CD8-positive, alpha-beta T cell (primary cell): ENCODE measurements at regions of chr7 and their contacts with region 1.

Region 1: DNA sequence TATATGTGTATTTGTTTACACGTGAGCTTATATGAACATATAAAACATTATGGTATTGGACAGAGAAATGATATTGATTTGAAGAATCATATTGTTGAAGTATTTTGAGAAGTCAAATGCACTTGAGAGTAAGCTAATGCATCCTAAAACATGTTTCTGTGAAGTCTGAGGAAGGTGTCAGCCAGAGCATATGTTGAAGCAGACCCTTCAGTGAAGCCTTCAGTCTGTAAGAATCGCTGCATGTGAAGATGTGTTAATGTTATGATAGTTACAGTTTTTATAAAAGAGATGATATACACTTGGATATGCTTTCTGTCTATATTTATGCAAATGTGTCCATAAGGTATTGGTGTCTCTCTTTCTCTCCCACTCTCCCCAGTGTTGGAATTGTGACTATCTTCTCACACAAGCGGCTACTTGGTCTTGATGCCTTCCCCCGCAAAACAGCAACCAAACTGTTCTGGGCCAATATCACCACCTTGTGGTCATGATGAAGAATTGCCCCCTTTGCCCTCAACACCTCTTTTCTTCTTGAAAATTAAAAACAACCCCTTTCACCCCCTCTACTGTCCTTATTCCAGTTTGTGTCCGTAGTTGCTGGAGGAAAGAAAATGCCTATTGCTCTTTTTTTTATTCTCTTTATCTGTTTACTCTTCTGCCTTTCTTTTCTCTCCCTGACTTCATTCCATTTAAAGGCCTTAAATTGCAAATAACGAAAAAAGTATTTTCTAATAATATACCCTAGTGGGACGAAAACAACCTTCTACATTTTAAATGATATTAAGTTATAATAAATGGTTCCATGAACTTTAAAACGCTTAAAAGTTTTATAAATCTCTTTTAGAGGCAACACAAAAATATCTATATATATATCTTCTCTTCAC is 64.9 kb downstream of the IKZF1 start:
- DNase-seq: peak in 4 of 9 experiments; percentile 55 to 92 (median 73)
- ATAC-seq: peak; percentile 58
- H3K4me3 ChIP-seq: no peak overlapping the region
- H3K4me3 Mint-ChIP-seq: peak overlapping the region; percentile 44
- H3K27ac ChIP-seq: peak overlapping the region in 1 of 2 experiments; percentile 67
- H3K27ac Mint-ChIP-seq: peak overlapping the region; percentile 99
- H3K4me1 ChIP-seq: peaks cover 95% of the 10 kb centered on the region
- H3K4me1 Mint-ChIP-seq: peaks cover 95% of the 10 kb centered on the region
- H3K27me3 ChIP-seq: no peaks in the 10 kb centered on the region
- H3K27me3 Mint-ChIP-seq: no peaks in the 10 kb centered on the region
- CTCF ChIP-seq: peak; percentile 92

Region 2: GRCh38 chr7:49927631-49928030 is 441.8 kb before region 1 on chr7:
- CTCF ChIA-PET with region 1: no interaction called
- POLR2A ChIA-PET with region 1: no interaction called
- intact Hi-C with region 1: no loop called
- DNase-seq: no peak
- ATAC-seq: no peak
- H3K4me3 ChIP-seq: no peak overlapping the region
- H3K4me3 Mint-ChIP-seq: no peak overlapping the region
- H3K27ac ChIP-seq: no peak overlapping the region
- H3K27ac Mint-ChIP-seq: no peak overlapping the region
- H3K4me1 ChIP-seq: no peaks in the 10 kb centered on the region
- H3K4me1 Mint-ChIP-seq: no peaks in the 10 kb centered on the region
- H3K27me3 ChIP-seq: no peaks in the 10 kb centered on the region
- H3K27me3 Mint-ChIP-seq: no peaks in the 10 kb centered on the region
- CTCF ChIP-seq: no peak

Region 3: GRCh38 chr7:50142425-50143017 is 226.9 kb before region 1 on chr7:
- CTCF ChIA-PET with region 1: interaction called, 9 read pairs
- POLR2A ChIA-PET with region 1: interaction called, 5 read pairs
- intact Hi-C with region 1: loop called (anchors 1 kb)
- DNase-seq: peak in 4 of 9 experiments; percentile 38 to 78 (median 59)
- ATAC-seq: peak; percentile 85
- H3K4me3 ChIP-seq: no peak overlapping the region
- H3K4me3 Mint-ChIP-seq: peak overlapping the region; percentile 57
- H3K27ac ChIP-seq: no peak overlapping the region
- H3K27ac Mint-ChIP-seq: peak overlapping the region; percentile 84
- H3K4me1 ChIP-seq: peaks cover 5% of the 10 kb centered on the region
- H3K4me1 Mint-ChIP-seq: peaks cover 15% of the 10 kb centered on the region
- H3K27me3 ChIP-seq: no peaks in the 10 kb centered on the region
- H3K27me3 Mint-ChIP-seq: no peaks in the 10 kb centered on the region
- CTCF ChIP-seq: peak; percentile 91

Region 4: DNA sequence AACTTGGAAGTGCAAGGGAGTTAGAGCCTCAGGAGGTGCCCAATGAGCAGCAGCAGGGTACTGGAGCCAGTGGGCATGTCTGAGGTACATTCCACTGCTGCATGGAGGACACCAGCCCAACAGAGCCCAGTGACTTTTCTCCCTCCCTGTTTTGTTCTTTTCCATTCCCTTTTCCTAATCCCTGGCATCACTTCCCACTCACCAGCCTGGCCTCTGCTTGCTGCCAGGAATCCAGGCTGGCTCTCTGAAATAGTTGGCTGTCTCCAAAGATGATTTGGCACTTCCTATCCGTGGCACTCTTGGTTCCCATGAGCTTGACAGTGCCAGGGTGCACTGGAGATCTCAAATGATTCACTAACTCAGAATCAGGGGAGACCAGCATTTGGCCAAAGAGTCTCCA is 178.6 kb before region 1 on chr7:
- CTCF ChIA-PET with region 1: no interaction called
- POLR2A ChIA-PET with region 1: no interaction called
- intact Hi-C with region 1: no loop called
- DNase-seq: no peak
- ATAC-seq: no peak
- H3K4me3 ChIP-seq: no peak overlapping the region
- H3K4me3 Mint-ChIP-seq: no peak overlapping the region
- H3K27ac ChIP-seq: no peak overlapping the region
- H3K27ac Mint-ChIP-seq: no peak overlapping the region
- H3K4me1 ChIP-seq: no peaks in the 10 kb centered on the region
- H3K4me1 Mint-ChIP-seq: no peaks in the 10 kb centered on the region
- H3K27me3 ChIP-seq: no peaks in the 10 kb centered on the region
- H3K27me3 Mint-ChIP-seq: peaks cover 3% of the 10 kb centered on the region
- CTCF ChIP-seq: no peak

Region 5: GRCh38 chr7:50212666-50213621 is 156.4 kb before region 1 on chr7:
- CTCF ChIA-PET with region 1: interaction called, 339 read pairs
- POLR2A ChIA-PET with region 1: interaction called, 5 read pairs
- intact Hi-C with region 1: no loop called
- DNase-seq: peak in 1 of 9 experiments; percentile 49
- ATAC-seq: peak; percentile 31
- H3K4me3 ChIP-seq: no peak overlapping the region
- H3K4me3 Mint-ChIP-seq: peak overlapping the region; percentile 27
- H3K27ac ChIP-seq: no peak overlapping the region
- H3K27ac Mint-ChIP-seq: peak overlapping the region; percentile 70
- H3K4me1 ChIP-seq: peaks cover 95% of the 10 kb centered on the region
- H3K4me1 Mint-ChIP-seq: peaks cover 97% of the 10 kb centered on the region
- H3K27me3 ChIP-seq: no peaks in the 10 kb centered on the region
- H3K27me3 Mint-ChIP-seq: no peaks in the 10 kb centered on the region
- CTCF ChIP-seq: no peak

Region 6: DNA sequence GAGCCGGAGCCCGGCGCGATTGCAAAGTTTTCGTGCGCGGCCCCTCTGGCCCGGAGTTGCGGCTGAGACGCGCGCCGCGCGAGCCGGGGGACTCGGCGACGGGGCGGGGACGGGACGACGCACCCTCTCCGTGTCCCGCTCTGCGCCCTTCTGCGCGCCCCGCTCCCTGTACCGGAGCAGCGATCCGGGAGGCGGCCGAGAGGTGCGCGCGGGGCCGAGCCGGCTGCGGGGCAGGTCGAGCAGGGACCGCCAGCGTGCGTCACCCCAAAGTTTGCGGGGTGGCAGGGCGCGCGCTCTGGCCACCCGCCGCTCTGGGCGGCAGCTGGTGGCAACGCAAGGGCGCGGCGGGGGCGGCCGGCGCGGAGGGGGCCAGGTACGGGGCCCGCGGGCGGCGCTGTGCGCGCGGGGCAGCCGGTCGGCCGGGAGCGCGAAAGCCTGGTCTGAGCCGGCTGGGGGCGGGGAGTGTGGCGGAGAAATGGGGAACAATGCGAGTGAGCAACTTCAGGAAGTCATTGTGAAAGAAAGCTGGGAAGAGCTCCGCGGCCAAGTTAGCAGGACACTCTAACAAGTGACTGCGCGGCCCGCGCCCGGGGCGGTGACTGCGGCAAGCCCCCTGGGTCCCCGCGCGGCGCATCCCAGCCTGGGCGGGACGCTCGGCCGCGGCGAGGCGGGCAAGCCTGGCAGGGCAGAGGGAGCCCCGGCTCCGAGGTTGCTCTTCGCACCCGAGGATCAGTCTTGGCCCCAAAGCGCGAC is 65.1 kb before region 1 on chr7 and contains the start of gene IKZF1:
- CTCF ChIA-PET with region 1: interaction called, 494 read pairs
- POLR2A ChIA-PET with region 1: interaction called, 1,039 read pairs
- intact Hi-C with region 1: loop called (anchors 1 kb)
- DNase-seq: peak; percentile 32 to 82 (median 65)
- ATAC-seq: peak; percentile 39
- H3K4me3 ChIP-seq: peak within 1 kb of the TSS; percentile 90 to 96
- H3K4me3 Mint-ChIP-seq: peak within 1 kb of the TSS; percentile 93
- H3K27ac ChIP-seq: peak within 1 kb of the TSS; percentile 91 to 96
- H3K27ac Mint-ChIP-seq: peak within 1 kb of the TSS; percentile 96
- H3K4me1 ChIP-seq: peaks cover 51% of the 10 kb centered on the region
- H3K4me1 Mint-ChIP-seq: peaks cover 51% of the 10 kb centered on the region
- H3K27me3 ChIP-seq: no peaks in the 10 kb centered on the region
- H3K27me3 Mint-ChIP-seq: no peaks in the 10 kb centered on the region
- CTCF ChIP-seq: no peak
- total RNA-seq, gene IKZF1: 248 TPM

Region 7: GRCh38 chr7:50317221-50317678 is 52.1 kb before region 1 on chr7:
- CTCF ChIA-PET with region 1: interaction called, 494 read pairs
- POLR2A ChIA-PET with region 1: interaction called, 1,039 read pairs
- intact Hi-C with region 1: loop called in 1 of 2 experiments (anchors 2 kb)
- DNase-seq: peak in 4 of 9 experiments; percentile 54 to 93 (median 83)
- ATAC-seq: peak; percentile 72
- H3K4me3 ChIP-seq: peak overlapping the region; percentile 21 to 52
- H3K4me3 Mint-ChIP-seq: peak overlapping the region; percentile 26
- H3K27ac ChIP-seq: peak overlapping the region; percentile 91 to 96
- H3K27ac Mint-ChIP-seq: peak overlapping the region; percentile 96
- H3K4me1 ChIP-seq: peaks cover 98% of the 10 kb centered on the region
- H3K4me1 Mint-ChIP-seq: peaks cover 95% of the 10 kb centered on the region
- H3K27me3 ChIP-seq: no peaks in the 10 kb centered on the region
- H3K27me3 Mint-ChIP-seq: no peaks in the 10 kb centered on the region
- CTCF ChIP-seq: no peak

Region 8: GRCh38 chr7:50335795-50336754 is 33.3 kb before region 1 on chr7:
- CTCF ChIA-PET with region 1: interaction called, 53 read pairs
- POLR2A ChIA-PET with region 1: interaction called, 30 read pairs
- intact Hi-C with region 1: loop called (anchors 1 to 2 kb)
- DNase-seq: peak; percentile 55 to 91 (median 84)
- ATAC-seq: peak; percentile 55
- H3K4me3 ChIP-seq: peak overlapping the region; percentile 10 to 19
- H3K4me3 Mint-ChIP-seq: peak overlapping the region; percentile 77
- H3K27ac ChIP-seq: peak overlapping the region; percentile 40 to 90
- H3K27ac Mint-ChIP-seq: no peak overlapping the region
- H3K4me1 ChIP-seq: peaks cover 99% of the 10 kb centered on the region
- H3K4me1 Mint-ChIP-seq: peaks cover 35% of the 10 kb centered on the region
- H3K27me3 ChIP-seq: no peaks in the 10 kb centered on the region
- H3K27me3 Mint-ChIP-seq: no peaks in the 10 kb centered on the region
- CTCF ChIP-seq: no peak

Region 9: GRCh38 chr7:50349963-50350944 is 19.1 kb before region 1 on chr7:
- CTCF ChIA-PET with region 1: interaction called, 146 read pairs
- POLR2A ChIA-PET with region 1: interaction called, 115 read pairs
- intact Hi-C with region 1: no loop called
- DNase-seq: peak in 8 of 9 experiments; percentile 58 to 82 (median 75)
- ATAC-seq: peak; percentile 63
- H3K4me3 ChIP-seq: peak overlapping the region; percentile 4 to 23
- H3K4me3 Mint-ChIP-seq: peak overlapping the region; percentile 56
- H3K27ac ChIP-seq: peak overlapping the region; percentile 67 to 90
- H3K27ac Mint-ChIP-seq: peak overlapping the region; percentile 96
- H3K4me1 ChIP-seq: peaks cover 100% of the 10 kb centered on the region
- H3K4me1 Mint-ChIP-seq: peaks cover 98% of the 10 kb centered on the region
- H3K27me3 ChIP-seq: no peaks in the 10 kb centered on the region
- H3K27me3 Mint-ChIP-seq: no peaks in the 10 kb centered on the region
- CTCF ChIP-seq: no peak

Region 10: DNA sequence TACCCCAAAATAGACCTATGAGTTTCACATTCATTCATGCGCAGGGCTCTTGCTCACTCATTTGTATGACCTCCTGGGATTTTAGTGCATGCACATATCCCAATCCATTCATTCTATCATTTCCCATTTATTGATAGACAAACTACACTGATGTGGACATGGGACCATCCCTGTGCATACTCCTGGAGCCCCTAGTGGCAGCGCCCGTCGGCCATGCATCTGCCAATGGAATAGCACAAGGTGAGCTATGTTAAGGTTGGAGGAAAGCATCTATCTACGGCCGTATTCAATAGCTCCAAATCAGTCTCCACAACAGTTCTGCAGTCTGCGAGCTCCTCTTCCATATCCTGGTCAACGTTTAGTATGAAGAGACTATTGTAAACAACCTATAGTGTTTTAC is 112.5 kb after region 1 on chr7:
- CTCF ChIA-PET with region 1: no interaction called
- POLR2A ChIA-PET with region 1: no interaction called
- intact Hi-C with region 1: no loop called
- DNase-seq: no peak
- ATAC-seq: no peak
- H3K4me3 ChIP-seq: no peak overlapping the region
- H3K4me3 Mint-ChIP-seq: no peak overlapping the region
- H3K27ac ChIP-seq: no peak overlapping the region
- H3K27ac Mint-ChIP-seq: no peak overlapping the region
- H3K4me1 ChIP-seq: no peaks in the 10 kb centered on the region
- H3K4me1 Mint-ChIP-seq: no peaks in the 10 kb centered on the region
- H3K27me3 ChIP-seq: no peaks in the 10 kb centered on the region
- H3K27me3 Mint-ChIP-seq: no peaks in the 10 kb centered on the region
- CTCF ChIP-seq: no peak